ENCODE measurements at regions of chr10 and their contacts with region 1.

Region 1: DNA sequence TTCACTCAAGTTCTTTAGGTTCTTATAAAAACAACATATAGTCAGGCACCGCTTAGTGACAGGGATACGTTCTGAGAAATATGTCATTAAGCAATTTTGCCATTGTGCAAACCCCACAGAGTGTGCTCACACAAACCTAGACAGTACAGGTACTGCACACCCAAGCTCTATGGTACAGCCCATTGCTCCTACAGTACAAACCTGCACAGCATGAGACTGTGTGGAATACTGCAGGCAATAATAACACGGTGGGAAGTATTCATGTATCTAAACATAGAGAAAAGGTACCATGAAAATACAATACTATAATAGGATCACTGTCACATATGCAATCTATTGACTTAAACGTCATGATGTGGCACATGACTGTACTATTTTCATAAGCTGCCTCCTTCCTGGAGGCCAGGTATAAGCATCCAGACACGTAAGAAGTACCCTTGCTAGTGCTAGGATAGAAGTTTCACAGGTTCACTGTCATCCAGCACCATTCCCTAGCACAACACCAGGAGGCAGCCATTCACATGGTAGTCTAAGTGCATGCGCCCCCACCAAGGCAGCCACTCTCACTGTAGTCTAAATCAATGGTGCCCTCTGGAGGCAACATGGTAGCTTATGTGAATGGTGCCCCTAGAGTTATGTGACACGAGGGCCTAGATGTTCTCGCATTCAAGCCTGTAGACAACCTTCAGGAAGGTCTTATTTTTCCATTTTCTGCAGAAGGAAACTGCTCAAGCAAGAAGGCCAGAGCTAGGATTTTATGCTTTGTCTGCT is 98.5 kb downstream of the ARHGAP22 start:
- DNase-seq: no peak
- ATAC-seq: peak; percentile 60
- H3K4me3 ChIP-seq: no peak overlapping the region
- H3K27ac ChIP-seq: no peak overlapping the region
- H3K4me1 ChIP-seq: peaks cover 6% of the 10 kb centered on the region
- H3K27me3 ChIP-seq: no peaks in the 10 kb centered on the region
- CTCF ChIP-seq: peak; percentile 35 to 55 (median 54); a peak in 5 of 6 replicates
- EP300 ChIP-seq: no peak
- POLR2A ChIP-seq: no peak
- RAD21 ChIP-seq: peak; percentile 68

Region 2: DNA sequence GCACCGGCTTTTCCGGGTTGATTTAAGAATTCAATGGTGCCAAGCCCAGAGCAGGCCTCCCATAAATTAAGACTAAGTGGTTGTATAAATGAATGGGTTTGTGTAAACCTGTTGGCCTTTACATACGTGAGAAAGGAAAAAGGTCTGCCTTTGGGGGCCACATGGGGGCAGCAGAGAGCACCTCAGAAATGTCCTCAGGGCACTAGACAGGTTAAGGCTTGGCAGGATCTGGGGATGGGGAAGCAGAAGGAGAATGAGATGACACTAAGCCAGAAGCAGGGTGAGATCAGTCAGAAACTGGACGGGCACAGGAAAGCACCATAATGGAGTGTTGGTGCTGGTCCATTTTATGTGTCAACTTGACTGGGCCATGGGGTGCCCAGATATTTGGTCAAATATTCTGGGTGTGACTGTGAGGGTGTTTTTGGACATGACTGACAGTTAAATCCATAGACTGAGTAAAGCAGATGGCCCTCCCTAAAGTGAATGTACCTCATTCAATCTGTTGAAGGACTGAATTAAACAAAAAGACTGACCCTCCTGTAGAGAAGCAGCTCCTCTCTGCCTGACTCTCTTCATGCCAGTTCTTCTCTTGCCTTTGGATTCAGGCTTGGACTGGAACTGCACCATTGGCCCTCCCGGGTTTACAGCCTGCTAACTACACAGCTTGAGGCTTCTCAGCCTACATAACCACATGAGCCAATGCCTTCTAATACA is 290.7 kb before region 1 on chr10:
- CTCF ChIA-PET with region 1: no interaction called
- POLR2A ChIA-PET with region 1: no interaction called
- RAD21 ChIA-PET with region 1: no interaction called
- SMC1A ChIA-PET with region 1: no interaction called
- in situ Hi-C with region 1: loop called (anchors 10 kb)
- intact Hi-C with region 1: loop called (anchors 1 kb)
- DNase-seq: peak; percentile 49
- ATAC-seq: peak; percentile 94
- H3K4me3 ChIP-seq: no peak overlapping the region
- H3K27ac ChIP-seq: no peak overlapping the region
- H3K4me1 ChIP-seq: no peaks in the 10 kb centered on the region
- H3K27me3 ChIP-seq: no peaks in the 10 kb centered on the region
- CTCF ChIP-seq: peak; percentile 50 to 81 (median 78)
- EP300 ChIP-seq: no peak
- POLR2A ChIP-seq: no peak
- RAD21 ChIP-seq: peak; percentile 83

Region 3: DNA sequence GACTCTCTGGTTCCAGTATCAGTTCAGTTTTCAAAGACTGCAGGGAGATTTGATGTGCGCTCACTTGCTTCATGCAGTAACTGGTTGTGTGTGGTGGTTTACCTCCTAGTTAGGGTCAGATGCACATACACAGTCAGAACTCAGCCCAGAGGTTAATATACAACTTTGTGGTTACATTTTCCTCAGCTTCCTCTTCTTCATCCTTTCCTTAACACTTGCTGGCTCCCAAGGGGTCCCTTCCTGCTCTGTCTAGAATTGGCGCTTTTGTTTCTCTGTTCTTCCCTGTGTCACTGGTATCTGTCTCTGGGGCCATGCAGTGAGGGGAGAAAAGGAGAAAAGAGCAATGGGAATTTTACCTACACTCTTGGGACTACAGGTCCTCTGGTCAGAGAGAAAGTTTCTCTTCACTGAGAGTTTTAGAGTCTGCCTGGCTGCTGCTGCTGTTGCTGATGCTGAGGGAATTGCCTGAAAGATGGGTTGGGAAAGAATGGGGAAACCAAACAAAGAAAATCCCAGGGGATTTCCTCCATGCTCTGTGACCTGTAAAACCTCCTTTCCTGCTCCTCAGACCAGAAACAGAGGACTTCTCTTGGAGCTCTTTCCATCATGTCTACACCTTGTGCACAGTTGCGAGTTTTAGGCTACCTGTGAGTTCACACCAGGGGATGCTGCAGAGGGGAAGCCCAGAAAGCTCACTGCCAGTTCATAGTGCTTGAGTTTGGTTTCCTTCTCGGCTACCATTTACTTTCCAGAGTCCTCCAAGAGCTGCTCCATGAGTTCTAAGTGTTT is 253.0 kb after region 1 on chr10:
- CTCF ChIA-PET with region 1: no interaction called
- POLR2A ChIA-PET with region 1: no interaction called
- RAD21 ChIA-PET with region 1: no interaction called
- SMC1A ChIA-PET with region 1: no interaction called
- in situ Hi-C with region 1: no loop called
- intact Hi-C with region 1: no loop called
- DNase-seq: peak; percentile 81
- ATAC-seq: peak; percentile 96
- H3K4me3 ChIP-seq: no peak overlapping the region
- H3K27ac ChIP-seq: peak overlapping the region; percentile 76
- H3K4me1 ChIP-seq: peaks cover 23% of the 10 kb centered on the region
- H3K27me3 ChIP-seq: no peaks in the 10 kb centered on the region
- CTCF ChIP-seq: 0 out of 6 replicates have a peak, but pooled peaks of 1 of the 3 experiments have one; percentile 2
- EP300 ChIP-seq: peak; percentile 78 to 83; a peak in 3 of 4 replicates
- POLR2A ChIP-seq: no peak
- RAD21 ChIP-seq: no peak